ENCODE measurements at regions of chr3 and their contacts with region 1.

Region 1: DNA sequence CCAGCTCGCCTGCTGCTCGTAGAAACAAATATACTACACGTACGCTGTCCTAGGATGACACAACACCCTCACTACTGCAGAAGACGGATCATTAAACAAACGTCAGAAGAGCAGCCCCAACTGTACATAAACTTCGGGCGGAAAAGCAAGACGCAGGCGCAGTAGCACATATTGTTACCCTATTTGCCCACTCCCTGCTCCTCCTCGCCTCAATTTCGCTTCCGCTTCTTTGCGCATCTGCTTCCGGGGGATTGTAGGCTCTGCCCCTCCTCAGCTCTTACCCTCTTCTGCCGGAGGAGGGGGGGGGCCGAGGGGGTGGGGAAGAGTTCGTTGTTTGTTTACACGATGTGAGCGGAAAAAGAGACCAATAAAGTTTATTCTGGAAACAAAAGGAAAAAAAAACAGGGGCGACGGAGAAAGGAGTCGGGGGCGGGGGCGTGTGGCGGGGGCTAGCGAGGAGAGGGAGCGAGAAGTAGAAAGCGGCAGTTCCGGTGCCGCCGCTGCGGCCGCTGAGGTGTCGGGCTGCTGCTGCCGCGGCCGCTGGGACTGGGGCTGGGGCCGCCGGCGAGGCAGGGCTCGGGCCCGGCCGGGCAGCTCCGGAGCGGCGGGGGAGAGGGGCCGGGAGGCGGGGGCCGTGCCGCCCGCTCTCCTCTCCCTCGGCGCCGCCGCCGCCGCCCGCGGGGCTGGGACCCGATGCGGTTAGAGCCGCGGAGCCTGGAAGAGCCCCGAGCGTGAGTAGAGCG is at the start of gene PIK3CA:
- DNase-seq: peak; percentile 92 to 96
- ATAC-seq: peak; percentile 94 to 98 (median 96)
- H3K4me3 ChIP-seq: peak within 1 kb of the TSS; percentile 96
- H3K27ac ChIP-seq: peak within 1 kb of the TSS; percentile 99
- H3K4me1 ChIP-seq: peaks cover 34% of the 10 kb centered on the region
- H3K27me3 ChIP-seq: no peaks in the 10 kb centered on the region
- CTCF ChIP-seq: no peak
- total RNA-seq, gene PIK3CA: 18.7 to 24.4 (median 20.0) TPM

Region 2: GRCh38 chr3:178762385-178762784 is 385.7 kb before region 1 on chr3:
- intact Hi-C with region 1: no loop called
- DNase-seq: no peak
- ATAC-seq: no peak
- H3K4me3 ChIP-seq: no peak overlapping the region
- H3K27ac ChIP-seq: no peak overlapping the region
- H3K4me1 ChIP-seq: no peaks in the 10 kb centered on the region
- H3K27me3 ChIP-seq: no peaks in the 10 kb centered on the region
- CTCF ChIP-seq: no peak

Region 3: GRCh38 chr3:179015551-179016020 is 132.5 kb before region 1 on chr3:
- intact Hi-C with region 1: loop called in 1 of 2 experiments (anchors 5 kb)
- DNase-seq: no peak
- ATAC-seq: peak; percentile 61 to 87 (median 80)
- H3K4me3 ChIP-seq: no peak overlapping the region
- H3K27ac ChIP-seq: no peak overlapping the region
- H3K4me1 ChIP-seq: no peaks in the 10 kb centered on the region
- H3K27me3 ChIP-seq: no peaks in the 10 kb centered on the region
- CTCF ChIP-seq: peak; percentile 87

Region 4: GRCh38 chr3:179071550-179072397 is 76.3 kb before region 1 on chr3 and contains the start of gene ZMAT3:
- intact Hi-C with region 1: loop called in 1 of 2 experiments (anchors 5 kb)
- DNase-seq: peak; percentile 88 to 94
- ATAC-seq: peak; percentile 97 to 99 (median 99)
- H3K4me3 ChIP-seq: peak within 1 kb of the TSS; percentile 90
- H3K27ac ChIP-seq: peak within 1 kb of the TSS; percentile 92
- H3K4me1 ChIP-seq: no peaks in the 10 kb centered on the region
- H3K27me3 ChIP-seq: no peaks in the 10 kb centered on the region
- CTCF ChIP-seq: no peak
- total RNA-seq, gene ZMAT3: 6.7 to 12.7 (median 9.1) TPM

Region 5: DNA sequence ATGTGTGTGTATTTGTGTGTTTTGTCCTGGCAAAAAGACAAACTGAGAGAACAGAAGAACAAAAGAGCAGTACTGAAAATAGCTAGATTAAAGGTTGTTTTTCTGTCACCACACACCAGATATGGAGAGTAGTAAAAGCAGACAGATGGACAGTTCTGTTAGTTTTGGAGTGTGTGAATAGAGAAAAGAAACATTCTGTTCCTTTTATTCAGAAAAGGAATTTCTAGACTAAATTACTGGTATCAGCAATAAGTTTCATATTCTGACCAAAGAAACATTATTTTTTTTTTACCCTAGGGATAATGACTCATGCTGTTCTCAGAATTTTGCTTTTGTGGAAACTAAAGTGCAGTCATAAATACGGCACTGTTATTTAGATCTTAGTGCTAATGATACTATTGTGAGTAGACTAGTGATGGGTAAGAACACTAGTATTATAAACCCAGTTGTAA is 33.0 kb after region 1 on chr3:
- intact Hi-C with region 1: loop called in 1 of 2 experiments (anchors 5 kb)
- DNase-seq: no peak
- ATAC-seq: peak; percentile 34 to 62 (median 59)
- H3K4me3 ChIP-seq: no peak overlapping the region
- H3K27ac ChIP-seq: peak overlapping the region; percentile 47
- H3K4me1 ChIP-seq: peaks cover 63% of the 10 kb centered on the region
- H3K27me3 ChIP-seq: no peaks in the 10 kb centered on the region
- CTCF ChIP-seq: no peak

Region 6: DNA sequence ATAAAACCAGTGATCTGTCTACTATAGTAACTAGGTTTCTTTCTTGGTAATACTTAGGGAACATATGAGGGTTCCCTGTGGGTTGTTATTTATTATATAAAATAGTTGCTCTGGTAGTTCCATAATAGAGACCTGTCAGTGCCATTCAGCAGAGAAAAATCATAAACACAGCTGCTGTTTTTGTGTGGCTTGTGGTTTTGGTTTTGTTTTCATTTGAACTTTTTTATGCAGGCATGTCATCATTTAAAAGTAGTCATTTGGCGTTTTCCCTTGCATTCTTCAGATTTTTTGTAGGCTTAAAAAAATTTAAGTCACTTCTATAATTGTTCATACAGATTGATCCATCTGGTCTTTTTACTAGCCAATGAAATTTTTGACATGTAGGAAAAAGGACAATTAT is 48.1 kb after region 1 on chr3:
- intact Hi-C with region 1: loop called in 1 of 2 experiments (anchors 5 kb)
- DNase-seq: no peak
- ATAC-seq: no peak
- H3K4me3 ChIP-seq: no peak overlapping the region
- H3K27ac ChIP-seq: peak overlapping the region; percentile 24
- H3K4me1 ChIP-seq: peaks cover 25% of the 10 kb centered on the region
- H3K27me3 ChIP-seq: no peaks in the 10 kb centered on the region
- CTCF ChIP-seq: no peak

Region 7: DNA sequence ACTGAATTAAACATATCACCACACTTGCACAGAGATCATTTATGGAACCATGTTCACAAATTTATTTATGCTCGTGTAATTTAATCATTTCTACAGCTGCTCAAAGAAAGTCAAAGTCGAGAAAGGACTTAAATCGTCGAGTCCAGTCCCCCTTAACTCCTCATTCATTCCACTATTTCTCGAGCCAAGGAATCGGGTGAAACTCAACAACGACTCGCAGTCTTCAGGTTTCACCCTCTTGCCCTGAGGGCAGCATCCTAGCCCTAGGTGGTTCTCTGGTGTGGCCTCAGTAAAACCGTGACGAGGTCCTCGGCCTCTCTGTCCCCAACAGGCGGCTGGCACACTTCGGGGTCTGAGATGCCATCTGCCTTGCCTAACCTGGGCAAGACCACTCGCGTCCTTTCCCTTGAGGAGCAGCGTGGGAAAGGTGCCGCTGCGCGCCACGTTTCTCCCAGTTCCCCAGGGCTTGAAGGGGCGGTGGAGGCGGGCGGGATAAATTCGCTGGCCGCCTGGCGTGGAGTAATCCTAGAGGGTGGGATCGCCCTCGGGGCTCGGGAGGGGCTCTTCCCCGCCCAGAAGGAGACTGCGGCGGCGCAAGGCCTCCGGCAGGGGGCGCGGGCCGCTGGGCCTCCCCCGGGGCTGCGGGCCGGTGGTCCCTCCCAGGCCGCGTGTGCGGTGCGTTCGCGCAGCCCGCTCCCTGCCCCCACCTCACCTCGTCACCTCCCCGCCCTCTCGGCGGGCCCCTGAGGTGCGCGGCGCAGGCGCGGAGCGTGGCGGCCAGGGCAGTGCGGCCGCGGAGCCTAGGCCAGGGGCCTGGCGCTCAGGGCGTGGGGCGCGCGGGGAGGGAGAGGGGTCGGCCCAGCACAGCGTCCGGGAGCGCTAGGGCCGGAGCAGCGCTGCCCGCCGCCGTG is 174.5 kb after region 1 on chr3 and contains the start of gene ZNF639:
- intact Hi-C with region 1: loop called (anchors 2 to 5 kb)
- DNase-seq: peak; percentile 90 to 92
- ATAC-seq: peak; percentile 91 to 96 (median 94)
- H3K4me3 ChIP-seq: peak within 1 kb of the TSS; percentile 99
- H3K27ac ChIP-seq: peak within 1 kb of the TSS; percentile 94
- H3K4me1 ChIP-seq: peaks cover 13% of the 10 kb centered on the region
- H3K27me3 ChIP-seq: no peaks in the 10 kb centered on the region
- CTCF ChIP-seq: peak; percentile 87
- total RNA-seq, gene ZNF639: 22.9 to 30.7 (median 27.9) TPM